ENCODE measurements at regions of chr12 and their contacts with region 1.

Region 1: GRCh38 chr12:6688999-6689882 is at the start of gene ZNF384:
- DNase-seq: peak; percentile 97 to 98 (median 98)
- ATAC-seq: peak; percentile 94
- H3K4me3 ChIP-seq: peak within 1 kb of the TSS; percentile 92
- H3K27ac ChIP-seq: peak within 1 kb of the TSS; percentile 98
- H3K4me1 ChIP-seq: no peaks in the 10 kb centered on the region
- H3K27me3 ChIP-seq: no peaks in the 10 kb centered on the region
- total RNA-seq, gene ZNF384: 32.9 to 35.0 (median 33.8) TPM

Region 2: GRCh38 chr12:6662906-6663742 is 26.1 kb before region 1 on chr12 and contains the start of gene ING4:
- intact Hi-C with region 1: loop called in 1 of 4 experiments (anchors 2 kb)
- DNase-seq: peak; percentile 98 to 99 (median 98)
- ATAC-seq: peak; percentile 100
- H3K4me3 ChIP-seq: peak within 1 kb of the TSS; percentile 92
- H3K27ac ChIP-seq: peak within 1 kb of the TSS; percentile 85
- H3K4me1 ChIP-seq: no peaks in the 10 kb centered on the region
- H3K27me3 ChIP-seq: no peaks in the 10 kb centered on the region
- total RNA-seq, gene ING4: 18.3 to 31.2 (median 30.2) TPM

Region 3: GRCh38 chr12:6792522-6793201 is 103.4 kb after region 1 on chr12:
- intact Hi-C with region 1: no loop called
- DNase-seq: peak in 2 of 3 donors; percentile 74 to 75
- ATAC-seq: peak; percentile 60 to 67
- H3K4me3 ChIP-seq: no peak overlapping the region
- H3K27ac ChIP-seq: no peak overlapping the region
- H3K4me1 ChIP-seq: no peaks in the 10 kb centered on the region
- H3K27me3 ChIP-seq: no peaks in the 10 kb centered on the region

Measured in right cardiac atrium (tissue), 5 donors.